Right ventricle myocardium superior (tissue), 1 donor: ENCODE measurements at regions of chr1 and their contacts with region 1.

Region 1: GRCh38 chr1:209576798-209577197 is 6.7 kb upstream of the CAMK1G start:
- DNase-seq: peak; percentile 81
- ATAC-seq: peak; percentile 97

Region 2: DNA sequence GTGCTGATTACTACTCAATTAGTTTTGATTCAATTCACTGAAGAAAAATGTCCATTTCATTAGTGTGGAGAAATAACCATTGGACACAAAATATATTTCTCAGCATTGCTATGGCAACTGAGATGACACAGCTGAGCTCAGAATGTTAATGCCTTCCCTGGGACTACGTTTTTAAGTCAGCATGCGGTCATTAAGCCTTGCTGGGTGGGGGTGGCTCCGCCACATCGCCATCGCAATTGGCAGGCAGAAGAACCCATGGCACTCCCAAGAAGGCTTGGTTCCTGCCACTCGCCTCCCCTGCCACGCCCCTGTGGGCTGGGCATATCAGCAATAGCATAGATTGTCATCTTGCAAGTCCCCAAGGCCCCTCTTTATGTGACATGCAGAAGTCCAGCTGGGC is 250.0 kb before region 1 on chr1:
- intact Hi-C with region 1: no loop called
- DNase-seq: no peak
- ATAC-seq: no peak

Region 3: DNA sequence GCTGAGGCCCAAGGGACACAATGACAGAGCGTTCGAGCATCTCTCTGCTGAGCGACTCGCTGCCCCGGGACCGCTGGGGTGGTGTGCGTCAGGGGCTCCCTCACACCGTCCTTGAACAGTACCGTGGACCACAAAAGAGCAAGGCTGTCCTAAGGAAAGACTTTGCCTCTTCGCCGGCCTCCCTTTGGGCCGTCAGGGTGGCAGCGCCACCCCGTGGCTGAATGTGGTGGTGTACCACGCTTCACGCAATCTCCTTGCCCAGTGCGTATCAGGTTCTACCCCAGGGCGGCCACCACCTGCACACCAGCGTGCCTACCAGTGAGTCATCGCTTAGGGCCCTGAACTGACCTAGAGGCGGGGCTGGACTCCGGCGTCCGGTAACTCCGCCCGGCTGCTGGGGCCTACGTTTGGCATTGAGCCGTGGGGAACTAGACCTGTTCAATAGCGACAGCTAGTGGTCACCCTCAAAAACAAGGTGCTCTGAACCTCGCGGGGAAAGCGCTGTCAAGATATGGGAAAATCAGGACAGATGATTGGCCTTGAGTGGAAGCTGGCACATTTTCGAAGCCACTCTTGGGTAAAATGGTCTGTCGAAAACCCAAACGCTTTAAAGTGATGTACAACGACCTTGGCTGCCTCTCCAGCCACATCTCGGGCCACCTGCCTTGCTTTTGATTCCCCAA is 170.9 kb after region 1 on chr1:
- intact Hi-C with region 1: loop called (anchors 5 kb)
- DNase-seq: peak; percentile 92
- ATAC-seq: peak; percentile 96

Region 4: DNA sequence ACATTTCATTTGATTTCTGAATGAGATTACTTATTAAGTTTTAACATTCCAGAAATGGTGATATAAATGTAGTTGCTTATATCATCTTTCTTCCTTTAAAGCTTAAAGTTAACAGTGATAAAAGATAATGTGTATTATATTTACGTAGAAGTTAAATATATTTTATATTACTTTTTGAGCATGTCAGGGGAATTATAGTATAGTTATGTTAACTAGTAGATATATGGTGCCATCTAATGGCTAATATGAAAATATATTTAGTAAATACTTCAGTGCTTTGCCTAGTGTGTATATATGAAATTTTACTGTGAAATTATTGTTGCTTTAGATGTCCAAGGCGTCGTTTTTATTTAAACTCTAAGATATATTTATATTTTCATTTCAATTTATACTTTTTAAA is 412.7 kb after region 1 on chr1:
- intact Hi-C with region 1: loop called (anchors 10 kb)
- DNase-seq: no peak
- ATAC-seq: no peak